Prostate gland (tissue), 2 donors: ENCODE measurements at regions of chr5 and their contacts with region 1.

Region 1: GRCh38 chr5:95822542-95823181 is at the start of gene GLRX:
- DNase-seq: peak; percentile 78
- H3K4me3 ChIP-seq: peak within 1 kb of the TSS; percentile 56
- H3K27ac ChIP-seq: peak within 1 kb of the TSS; percentile 76 to 82
- H3K4me1 ChIP-seq: peaks cover 3% of the 10 kb centered on the region
- H3K27me3 ChIP-seq: no peaks in the 10 kb centered on the region
- CTCF ChIP-seq: no peak
- POLR2A ChIP-seq: peak; percentile 55
- total RNA-seq, gene GLRX: 16.6 to 34.8 TPM

Region 2: DNA sequence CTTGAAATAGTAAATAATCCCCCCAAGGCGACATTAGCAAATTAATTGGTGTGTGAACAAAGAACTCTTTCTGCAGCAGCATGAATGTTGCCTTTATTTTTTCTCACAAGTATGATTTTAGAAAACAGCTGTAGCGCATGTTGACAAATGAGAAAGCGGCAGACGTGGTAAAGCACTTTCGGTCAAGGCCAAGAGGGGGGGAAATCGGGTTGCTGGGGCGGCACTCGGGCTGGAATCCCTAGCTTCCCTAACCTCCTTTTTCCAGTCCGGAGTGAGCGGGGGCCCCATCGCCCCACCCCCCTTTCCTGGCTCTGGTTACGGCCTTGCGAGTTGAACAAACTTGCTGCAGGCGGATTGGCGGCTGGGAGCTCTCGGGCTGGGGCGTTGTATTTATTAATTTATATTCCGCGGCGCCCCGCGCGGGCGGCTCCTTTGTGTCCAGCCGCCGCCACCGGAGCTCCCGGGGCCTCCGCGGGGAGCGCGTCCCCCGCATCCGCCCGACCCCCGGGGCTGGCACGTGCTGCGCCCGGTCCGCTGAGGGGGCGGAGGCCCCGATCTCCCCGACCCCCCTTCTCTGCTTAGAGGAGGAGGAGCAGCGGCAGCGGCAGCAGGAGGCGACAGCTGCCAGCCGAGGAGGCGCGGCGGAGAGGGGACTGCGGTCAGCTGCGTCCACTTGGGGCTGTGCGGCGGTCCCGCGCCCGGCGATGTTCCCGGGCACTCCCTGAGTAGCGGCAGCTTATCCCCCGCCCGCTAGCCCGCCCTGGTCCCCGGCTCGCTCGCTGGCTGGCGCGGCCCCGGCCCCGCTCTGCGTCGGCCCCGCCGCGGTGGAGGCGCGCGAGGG is 91.7 kb before region 1 on chr5 and contains the start of gene RHOBTB3:
- intact Hi-C with region 1: loop called (anchors 5 kb)
- DNase-seq: peak; percentile 88
- H3K4me3 ChIP-seq: peak within 1 kb of the TSS; percentile 86 to 91
- H3K27ac ChIP-seq: peak within 1 kb of the TSS; percentile 95 to 97
- H3K4me1 ChIP-seq: peaks cover 3% of the 10 kb centered on the region
- H3K27me3 ChIP-seq: no peaks in the 10 kb centered on the region
- CTCF ChIP-seq: peak in 1 of 4 experiments; percentile 14
- POLR2A ChIP-seq: peak; percentile 67
- total RNA-seq, gene RHOBTB3: 87.3 to 134 TPM